ENCODE measurements at regions of chr1 and their contacts with region 1.

Region 1: GRCh38 chr1:62082456-62083363 is 111.9 kb upstream of the L1TD1 start:
- DNase-seq: no peak
- ATAC-seq: peak; percentile 90
- H3K4me3 ChIP-seq: no peak overlapping the region
- H3K27ac ChIP-seq: no peak overlapping the region
- H3K4me1 ChIP-seq: no peaks in the 10 kb centered on the region
- H3K27me3 ChIP-seq: no peaks in the 10 kb centered on the region
- CTCF ChIP-seq: peak; percentile 82 to 95 (median 89)
- EP300 ChIP-seq: no peak
- POLR2A ChIP-seq: no peak
- RAD21 ChIP-seq: peak; percentile 69

Region 2: GRCh38 chr1:61776091-61776490 is 306.6 kb before region 1 on chr1:
- CTCF ChIA-PET with region 1: no interaction called
- POLR2A ChIA-PET with region 1: no interaction called
- RAD21 ChIA-PET with region 1: no interaction called
- SMC1A ChIA-PET with region 1: no interaction called
- in situ Hi-C with region 1: no loop called
- intact Hi-C with region 1: no loop called
- DNase-seq: no peak
- ATAC-seq: no peak
- H3K4me3 ChIP-seq: no peak overlapping the region
- H3K27ac ChIP-seq: no peak overlapping the region
- H3K4me1 ChIP-seq: no peaks in the 10 kb centered on the region; the same call in 1 of the 2 replicates
- H3K27me3 ChIP-seq: no peaks in the 10 kb centered on the region
- CTCF ChIP-seq: no peak
- EP300 ChIP-seq: no peak
- POLR2A ChIP-seq: no peak
- RAD21 ChIP-seq: no peak

Region 3: GRCh38 chr1:62024690-62025089 is 58.0 kb before region 1 on chr1:
- CTCF ChIA-PET with region 1: no interaction called
- POLR2A ChIA-PET with region 1: no interaction called
- RAD21 ChIA-PET with region 1: no interaction called
- SMC1A ChIA-PET with region 1: no interaction called
- in situ Hi-C with region 1: no loop called
- intact Hi-C with region 1: no loop called
- DNase-seq: no peak
- ATAC-seq: no peak
- H3K4me3 ChIP-seq: no peak overlapping the region
- H3K27ac ChIP-seq: no peak overlapping the region
- H3K4me1 ChIP-seq: no peaks in the 10 kb centered on the region
- H3K27me3 ChIP-seq: no peaks in the 10 kb centered on the region
- CTCF ChIP-seq: no peak
- EP300 ChIP-seq: no peak
- POLR2A ChIP-seq: no peak
- RAD21 ChIP-seq: no peak

Region 4: DNA sequence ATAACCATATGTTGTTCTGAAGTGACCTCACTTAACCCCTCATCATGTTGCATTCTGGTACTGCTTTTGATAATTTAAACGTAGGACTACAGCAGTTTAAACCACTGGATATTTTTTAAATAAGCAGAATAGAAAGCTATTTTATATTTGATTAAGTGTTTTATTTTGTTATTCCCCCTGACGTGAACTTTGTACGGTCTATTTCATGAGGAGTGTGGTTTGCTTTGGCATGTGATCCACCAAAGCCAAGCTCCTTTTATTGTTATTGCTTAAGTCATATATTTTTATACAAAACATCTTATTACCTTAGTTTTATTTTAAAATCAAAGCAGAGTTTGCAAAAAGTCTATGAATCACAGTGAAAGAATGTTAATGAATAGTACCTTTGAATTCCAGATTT is 10.6 kb after region 1 on chr1:
- CTCF ChIA-PET with region 1: interaction called, 48 read pairs
- POLR2A ChIA-PET with region 1: no interaction called
- RAD21 ChIA-PET with region 1: no interaction called
- SMC1A ChIA-PET with region 1: interaction called, 3 read pairs
- in situ Hi-C with region 1: no loop called
- intact Hi-C with region 1: no loop called
- DNase-seq: no peak
- ATAC-seq: no peak
- H3K4me3 ChIP-seq: no peak overlapping the region
- H3K27ac ChIP-seq: no peak overlapping the region
- H3K4me1 ChIP-seq: no peaks in the 10 kb centered on the region
- H3K27me3 ChIP-seq: no peaks in the 10 kb centered on the region
- CTCF ChIP-seq: no peak
- EP300 ChIP-seq: no peak
- POLR2A ChIP-seq: no peak
- RAD21 ChIP-seq: no peak

Region 5: DNA sequence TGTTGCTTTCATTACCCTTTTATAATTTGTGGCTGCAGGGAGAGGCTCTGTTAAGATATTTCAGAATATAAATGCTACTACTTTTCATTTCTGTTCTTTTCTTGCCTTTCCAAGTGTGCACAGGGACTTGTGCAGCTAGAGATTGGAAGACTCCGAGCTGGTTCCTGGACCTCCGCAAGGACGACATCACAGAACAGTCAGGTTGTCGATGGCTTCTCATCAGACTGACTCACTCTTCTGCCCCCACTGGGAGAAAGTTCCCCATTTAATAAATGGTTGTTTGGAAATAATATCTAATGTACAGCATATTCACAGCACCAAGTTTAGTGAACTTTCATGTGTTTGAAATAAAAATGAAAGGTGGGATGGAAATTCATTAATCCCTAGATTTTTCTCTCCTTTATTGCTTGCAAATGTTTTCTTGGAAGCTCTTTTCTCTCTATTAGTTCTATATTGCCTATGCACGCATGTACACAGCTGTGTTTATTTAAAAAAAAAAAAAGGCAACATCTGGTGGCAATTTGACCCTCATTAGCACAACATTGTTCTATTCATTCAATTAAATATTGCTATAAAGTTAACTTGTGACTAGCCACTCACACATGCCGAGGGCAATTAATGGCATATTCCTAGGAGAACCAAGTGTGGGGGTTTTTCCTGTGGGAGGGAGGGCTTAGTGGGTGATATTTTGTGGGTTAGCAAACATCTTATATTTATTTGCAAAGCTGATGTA is 34.5 kb after region 1 on chr1:
- CTCF ChIA-PET with region 1: interaction called, 12 read pairs
- POLR2A ChIA-PET with region 1: no interaction called
- RAD21 ChIA-PET with region 1: no interaction called
- SMC1A ChIA-PET with region 1: interaction called, 4 read pairs
- in situ Hi-C with region 1: no loop called
- intact Hi-C with region 1: no loop called
- DNase-seq: no peak
- ATAC-seq: no peak
- H3K4me3 ChIP-seq: no peak overlapping the region
- H3K27ac ChIP-seq: no peak overlapping the region
- H3K4me1 ChIP-seq: no peaks in the 10 kb centered on the region
- H3K27me3 ChIP-seq: no peaks in the 10 kb centered on the region
- CTCF ChIP-seq: no peak
- EP300 ChIP-seq: no peak
- POLR2A ChIP-seq: no peak
- RAD21 ChIP-seq: no peak

Region 6: GRCh38 chr1:62131093-62131725 is 48.5 kb after region 1 on chr1:
- CTCF ChIA-PET with region 1: interaction called, 95 read pairs
- POLR2A ChIA-PET with region 1: no interaction called
- RAD21 ChIA-PET with region 1: interaction called, 14 read pairs
- SMC1A ChIA-PET with region 1: interaction called, 16 read pairs
- in situ Hi-C with region 1: no loop called
- intact Hi-C with region 1: loop called (anchors 1 kb)
- DNase-seq: no peak
- ATAC-seq: peak; percentile 99
- H3K4me3 ChIP-seq: no peak overlapping the region
- H3K27ac ChIP-seq: no peak overlapping the region
- H3K4me1 ChIP-seq: no peaks in the 10 kb centered on the region
- H3K27me3 ChIP-seq: no peaks in the 10 kb centered on the region
- CTCF ChIP-seq: peak; percentile 86 to 96 (median 96)
- EP300 ChIP-seq: no peak
- POLR2A ChIP-seq: no peak
- RAD21 ChIP-seq: peak; percentile 82

Region 7: DNA sequence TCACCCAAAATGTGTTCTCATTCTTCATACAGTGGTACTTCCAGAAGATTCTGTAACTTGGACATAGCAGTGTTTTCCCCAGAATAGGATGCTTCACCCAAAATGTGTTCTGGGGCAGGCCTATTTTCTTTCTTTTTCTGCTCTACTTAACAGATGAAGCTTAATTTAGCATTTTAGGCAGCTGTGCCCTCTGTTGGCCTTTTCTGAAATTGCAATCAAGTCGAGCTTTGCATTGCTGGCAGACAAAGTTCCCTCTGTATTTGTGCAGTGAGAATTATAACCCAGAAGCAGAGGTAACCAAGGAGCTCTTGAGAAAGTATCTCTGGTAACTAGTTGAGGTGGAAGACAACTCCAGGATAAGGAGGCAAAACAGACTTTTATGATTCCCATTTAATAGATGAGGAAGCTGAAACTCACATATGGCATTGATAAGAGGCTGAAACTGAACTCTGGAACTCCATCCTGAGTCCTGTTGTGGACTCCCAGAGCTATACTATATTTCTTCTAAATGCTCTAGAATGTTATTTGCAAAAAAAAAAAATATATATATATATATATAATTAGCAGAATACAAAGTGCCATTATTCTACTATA is 61.6 kb after region 1 on chr1:
- CTCF ChIA-PET with region 1: interaction called, 35 read pairs
- POLR2A ChIA-PET with region 1: no interaction called
- RAD21 ChIA-PET with region 1: interaction called, 9 read pairs
- SMC1A ChIA-PET with region 1: interaction called, 11 read pairs
- in situ Hi-C with region 1: no loop called
- intact Hi-C with region 1: no loop called
- DNase-seq: no peak
- ATAC-seq: peak; percentile 75
- H3K4me3 ChIP-seq: no peak overlapping the region
- H3K27ac ChIP-seq: no peak overlapping the region
- H3K4me1 ChIP-seq: no peaks in the 10 kb centered on the region
- H3K27me3 ChIP-seq: no peaks in the 10 kb centered on the region
- CTCF ChIP-seq: peak; percentile 64 to 81 (median 76)
- EP300 ChIP-seq: no peak
- POLR2A ChIP-seq: no peak
- RAD21 ChIP-seq: peak; percentile 66

Region 8: GRCh38 chr1:62407405-62408009 is 324.8 kb after region 1 on chr1:
- CTCF ChIA-PET with region 1: interaction called, 4 read pairs
- POLR2A ChIA-PET with region 1: no interaction called
- RAD21 ChIA-PET with region 1: no interaction called
- SMC1A ChIA-PET with region 1: no interaction called
- in situ Hi-C with region 1: no loop called
- intact Hi-C with region 1: loop called (anchors 2 kb)
- DNase-seq: no peak
- ATAC-seq: peak; percentile 74
- H3K4me3 ChIP-seq: no peak overlapping the region
- H3K27ac ChIP-seq: no peak overlapping the region
- H3K4me1 ChIP-seq: no peaks in the 10 kb centered on the region
- H3K27me3 ChIP-seq: no peaks in the 10 kb centered on the region; a peak in 1 of 4 replicates
- CTCF ChIP-seq: peak; percentile 64 to 73 (median 71)
- EP300 ChIP-seq: no peak
- POLR2A ChIP-seq: no peak
- RAD21 ChIP-seq: peak; percentile 82

Measured in GM12878 (cell line).